ENCODE measurements at regions of chr1 and their contacts with region 1.

Region 1: GRCh38 chr1:89615676-89616598 is 17.0 kb upstream of the LRRC8C start:
- DNase-seq: no peak
- H3K4me3 Mint-ChIP-seq: no peak overlapping the region
- H3K27ac Mint-ChIP-seq: no peak overlapping the region
- H3K4me1 Mint-ChIP-seq: peaks cover 83% of the 10 kb centered on the region
- H3K27me3 Mint-ChIP-seq: no peaks in the 10 kb centered on the region

Region 2: GRCh38 chr1:89499320-89499719 is 116.6 kb before region 1 on chr1:
- CTCF ChIA-PET with region 1: no interaction called
- POLR2A ChIA-PET with region 1: no interaction called
- DNase-seq: no peak
- H3K4me3 Mint-ChIP-seq: no peak overlapping the region
- H3K27ac Mint-ChIP-seq: no peak overlapping the region
- H3K4me1 Mint-ChIP-seq: no peaks in the 10 kb centered on the region
- H3K27me3 Mint-ChIP-seq: peaks cover 11% of the 10 kb centered on the region

Region 3: DNA sequence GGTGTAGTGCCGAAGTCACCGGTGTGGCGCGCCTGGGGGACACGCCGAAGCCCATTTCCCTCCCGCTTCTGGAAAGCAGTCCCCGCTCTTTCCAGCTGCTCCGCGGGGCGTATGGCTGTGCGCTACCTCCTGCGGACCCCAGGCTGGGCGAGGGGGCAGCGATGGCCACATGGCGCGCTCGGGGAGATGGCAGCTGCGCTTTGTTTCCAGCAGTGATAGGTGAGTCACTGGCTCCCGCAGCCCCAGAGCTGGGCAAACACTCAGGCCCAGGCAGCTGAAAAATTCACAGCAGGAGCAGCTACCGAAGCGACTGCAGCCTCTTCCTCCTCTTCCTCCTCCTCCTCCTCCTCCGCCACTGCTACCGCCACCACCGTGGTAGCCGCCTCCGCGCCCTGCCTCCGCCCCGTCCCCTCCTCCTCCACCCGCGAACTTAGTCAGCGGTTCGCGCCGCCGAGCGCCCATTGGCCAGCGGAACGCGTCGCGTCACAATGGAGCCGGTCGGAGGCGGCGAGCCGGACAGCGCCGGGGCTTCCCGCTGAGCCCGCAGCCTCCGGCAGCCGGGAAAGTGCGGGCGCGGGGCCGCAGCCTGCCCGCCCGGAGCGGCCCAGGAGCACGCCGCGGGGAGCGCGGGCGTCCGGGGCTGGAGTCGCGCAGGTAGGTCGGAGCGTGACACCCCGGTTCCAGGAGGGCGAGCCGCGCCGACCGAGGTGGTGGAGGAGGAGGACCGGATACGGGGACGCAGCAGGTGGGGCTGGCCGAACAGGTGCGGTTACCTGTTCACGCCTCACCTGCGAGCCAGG is 91.4 kb before region 1 on chr1 and contains the start of gene LRRC8B:
- CTCF ChIA-PET with region 1: no interaction called
- POLR2A ChIA-PET with region 1: interaction called, 69 read pairs
- DNase-seq: peak; percentile 92
- H3K4me3 Mint-ChIP-seq: no peak within 1 kb of the TSS
- H3K27ac Mint-ChIP-seq: peak within 1 kb of the TSS; percentile 93
- H3K4me1 Mint-ChIP-seq: peaks cover 27% of the 10 kb centered on the region
- H3K27me3 Mint-ChIP-seq: no peaks in the 10 kb centered on the region
- total RNA-seq, gene LRRC8B: 21.3 to 21.7 TPM

Region 4: DNA sequence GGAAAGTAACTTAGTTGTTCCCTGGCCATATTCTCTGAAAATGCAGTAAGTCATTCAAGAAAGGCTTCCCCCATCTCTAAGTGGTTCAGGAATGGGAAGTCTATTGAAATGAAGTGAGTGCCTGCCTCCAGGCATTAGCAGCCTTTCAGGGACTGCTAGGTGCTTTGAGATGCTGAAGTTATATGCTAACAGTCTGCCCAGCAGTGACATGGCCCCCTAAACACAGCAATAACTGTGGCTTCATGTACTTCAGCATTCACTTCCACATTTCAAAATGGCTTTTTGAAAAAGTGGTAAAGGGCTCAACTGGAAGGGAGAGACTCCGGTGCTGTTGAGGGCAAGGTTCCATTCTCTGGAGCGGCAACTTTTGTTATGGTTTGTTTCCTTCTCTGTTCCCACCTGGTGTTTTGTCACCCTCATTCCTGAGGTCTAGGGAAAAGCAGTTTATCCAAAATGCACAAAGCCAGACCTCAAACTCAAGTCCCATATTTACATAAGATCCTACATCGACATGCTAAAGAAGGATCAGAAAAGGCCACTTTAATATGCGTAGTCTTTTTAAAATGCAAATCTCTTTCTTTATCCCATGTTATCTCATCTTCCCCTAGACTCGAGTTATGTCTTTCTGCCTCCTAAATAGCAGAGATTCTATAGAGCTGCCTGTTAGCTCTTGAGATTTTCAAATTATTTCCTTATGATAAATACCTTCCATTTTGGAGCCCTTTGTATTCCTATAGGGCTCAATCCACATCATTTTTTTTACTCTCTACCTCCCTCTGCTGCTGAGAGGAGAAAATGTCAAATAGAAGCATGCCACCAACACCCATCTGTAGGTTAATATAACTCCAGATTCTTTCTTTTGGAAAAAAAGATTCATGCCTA is 17.2 kb before region 1 on chr1:
- CTCF ChIA-PET with region 1: interaction called, 26 read pairs
- POLR2A ChIA-PET with region 1: interaction called, 828 read pairs
- DNase-seq: no peak
- H3K4me3 Mint-ChIP-seq: no peak overlapping the region
- H3K27ac Mint-ChIP-seq: peak overlapping the region; percentile 47
- H3K4me1 Mint-ChIP-seq: peaks cover 71% of the 10 kb centered on the region
- H3K27me3 Mint-ChIP-seq: no peaks in the 10 kb centered on the region

Region 5: GRCh38 chr1:89675677-89676076 is 59.7 kb after region 1 on chr1:
- CTCF ChIA-PET with region 1: no interaction called
- POLR2A ChIA-PET with region 1: no interaction called
- DNase-seq: no peak
- H3K4me3 Mint-ChIP-seq: no peak overlapping the region
- H3K27ac Mint-ChIP-seq: peak overlapping the region; percentile 33
- H3K4me1 Mint-ChIP-seq: peaks cover 73% of the 10 kb centered on the region
- H3K27me3 Mint-ChIP-seq: no peaks in the 10 kb centered on the region

Measured in activated CD4-positive, alpha-beta memory T cell treated with anti-CD3 and anti-CD28 coated beads, Interleukin-2, amount 10 ng/mL, durations not matched to agents 7 days and 5 days (primary cell).